Right ventricle myocardium inferior (tissue), 1 donor: ENCODE measurements at regions of chr19 and their contacts with region 1.

Region 1: GRCh38 chr19:37466798-37467607 is at the start of gene ZNF569:
- DNase-seq: peak; percentile 93
- ATAC-seq: peak; percentile 83
- total RNA-seq, gene ZNF569: 6.0 TPM

Region 2: GRCh38 chr19:36772311-36773222 is 694.4 kb before region 1 on chr19 and contains the start of gene ZNF850:
- intact Hi-C with region 1: loop called (anchors 5 kb)
- DNase-seq: peak; percentile 97
- ATAC-seq: peak; percentile 97
- total RNA-seq, gene ZNF850: 4.1 TPM

Region 3: DNA sequence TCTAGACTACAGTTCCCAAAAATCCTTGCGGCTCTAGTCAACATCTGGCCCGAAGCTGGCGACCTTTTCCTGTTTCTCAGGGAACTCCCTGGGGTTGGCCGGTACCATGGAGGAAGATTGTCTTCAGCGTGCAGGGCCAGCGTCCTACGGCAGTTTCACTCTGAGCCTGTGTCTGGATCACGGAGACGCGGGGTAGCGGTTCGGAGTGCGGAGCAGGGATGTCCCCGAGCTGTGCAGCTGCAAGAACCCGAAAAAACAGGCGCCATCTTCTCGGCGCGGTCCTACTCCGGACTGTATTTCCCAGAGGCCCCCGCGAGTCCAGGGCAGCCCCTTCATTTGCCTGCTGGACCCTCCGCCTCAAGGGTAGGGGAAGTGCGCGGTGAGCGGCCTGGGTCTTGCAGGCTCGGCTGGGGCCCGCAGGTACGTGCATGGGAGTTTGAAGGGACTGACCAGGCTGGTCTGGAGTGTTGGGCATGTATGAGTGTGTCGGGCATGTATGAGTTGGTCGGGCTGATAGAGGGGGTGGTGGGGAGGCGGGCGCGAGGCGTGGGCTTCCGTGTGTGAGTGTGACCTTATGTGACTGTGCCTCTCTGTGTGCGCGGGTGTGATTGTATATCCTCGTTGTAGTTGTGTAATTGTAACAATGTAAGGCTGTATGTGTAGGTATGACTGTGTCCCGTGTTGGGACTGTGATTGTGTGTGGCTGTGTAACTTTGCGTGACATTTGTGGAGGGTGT is 249.0 kb before region 1 on chr19 and contains the start of gene ZNF383:
- intact Hi-C with region 1: loop called (anchors 5 kb)
- DNase-seq: peak; percentile 94
- ATAC-seq: peak; percentile 98
- total RNA-seq, gene ZNF383: 9.1 TPM

Region 4: GRCh38 chr19:37309834-37310575 is 157.0 kb before region 1 on chr19:
- intact Hi-C with region 1: loop called (anchors 10 kb)
- DNase-seq: no peak
- ATAC-seq: no peak

Region 5: DNA sequence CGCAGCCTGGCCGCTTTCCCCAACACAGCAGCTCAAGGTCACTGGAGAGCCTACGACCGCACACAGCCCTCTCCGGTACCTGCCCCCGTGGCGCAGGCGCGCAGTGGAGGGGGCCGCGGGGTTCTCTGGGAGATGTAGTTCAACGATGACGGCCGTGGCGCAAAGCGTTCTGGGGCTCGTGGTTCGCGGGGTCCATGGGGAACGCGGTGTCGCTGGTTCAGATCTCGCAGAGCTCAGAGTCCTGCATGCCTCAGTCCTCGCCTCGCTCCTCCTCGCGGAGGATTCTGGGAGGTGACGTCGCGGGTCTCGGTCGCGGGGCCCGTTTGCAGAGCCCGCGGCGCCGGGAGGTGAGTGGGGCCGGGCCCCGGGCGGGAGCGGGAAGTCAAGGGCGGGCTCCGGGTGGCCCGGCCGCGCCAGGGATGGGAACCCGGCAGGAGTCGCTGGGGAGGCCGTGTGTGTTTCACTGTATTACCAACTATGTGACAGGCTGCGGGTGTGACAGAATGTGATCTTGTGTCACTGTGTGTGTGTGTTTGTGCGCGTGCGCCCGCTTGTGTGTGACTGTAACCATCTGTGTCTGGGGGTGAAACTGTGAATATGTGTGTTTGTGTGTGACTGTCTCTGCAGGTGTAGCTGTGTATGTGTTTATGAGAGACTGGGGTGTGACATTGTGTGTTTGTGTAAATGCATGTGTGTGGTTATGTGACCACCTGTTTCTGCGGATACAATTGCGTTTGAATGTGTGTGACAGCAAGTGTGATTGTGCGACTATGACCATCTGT is 95.9 kb before region 1 on chr19 and contains the start of gene ZNF527:
- intact Hi-C with region 1: loop called (anchors 2 kb)
- DNase-seq: peak; percentile 98
- ATAC-seq: peak; percentile 99
- total RNA-seq, gene ZNF527: 5.6 TPM

Region 6: GRCh38 chr19:37506387-37507166 is 39.6 kb after region 1 on chr19 and contains the start of gene ZNF793:
- intact Hi-C with region 1: loop called (anchors 2 kb)
- DNase-seq: peak; percentile 84
- ATAC-seq: peak; percentile 92
- total RNA-seq, gene ZNF793: 5.4 TPM

Region 7: GRCh38 chr19:37594304-37594981 is 127.4 kb after region 1 on chr19 and contains the starts of genes ZNF540 and ZNF571:
- intact Hi-C with region 1: loop called (anchors 2 kb)
- DNase-seq: peak; percentile 96
- ATAC-seq: peak; percentile 100
- total RNA-seq, gene ZNF540: 6.8 TPM
- total RNA-seq, gene ZNF571: 3.8 TPM